HCT116 (cell line): ENCODE measurements at regions of chr3 and their contacts with region 1.

Region 1: GRCh38 chr3:197186887-197187588 is 111.4 kb downstream of the DLG1 start:
- DNase-seq: peak; percentile 32
- ATAC-seq: peak; percentile 90
- H3K4me3 ChIP-seq: no peak overlapping the region
- H3K27ac ChIP-seq: no peak overlapping the region
- H3K4me1 ChIP-seq: no peaks in the 10 kb centered on the region
- H3K27me3 ChIP-seq: no peaks in the 10 kb centered on the region
- CTCF ChIP-seq: peak; percentile 75 to 89 (median 81)
- POLR2A ChIP-seq: no peak
- RAD21 ChIP-seq: peak; percentile 80

Region 2: DNA sequence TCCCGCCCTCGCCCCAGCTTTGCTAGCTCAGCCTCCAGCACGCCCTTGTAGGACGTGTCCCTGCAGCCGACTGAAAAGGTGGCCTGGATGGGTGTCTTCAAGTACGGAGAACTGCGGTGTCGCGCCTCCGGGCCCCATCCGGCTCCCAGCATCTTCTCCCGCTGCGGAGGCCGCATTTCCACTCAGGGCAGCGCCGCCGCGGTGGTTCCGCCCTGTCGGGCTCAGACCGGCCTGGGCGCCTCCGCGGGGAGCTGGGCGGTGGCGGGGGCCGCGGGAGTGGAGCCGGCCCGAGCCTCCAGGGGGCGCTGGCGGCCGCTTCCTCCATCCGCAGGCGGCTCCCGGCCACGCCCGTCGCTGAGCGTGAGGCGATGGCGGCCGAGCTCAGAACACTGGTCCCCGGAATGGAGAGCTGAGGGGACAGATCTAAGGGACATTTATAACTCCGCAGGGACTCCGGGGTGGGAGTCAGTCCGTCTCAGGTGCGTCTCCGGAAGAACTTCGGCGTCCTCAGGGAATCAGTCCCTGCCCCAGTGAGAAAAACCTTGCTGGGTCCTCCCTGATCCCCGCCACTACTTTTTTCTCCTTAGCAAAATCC is 658.3 kb before region 1 on chr3:
- CTCF ChIA-PET with region 1: no interaction called
- POLR2A ChIA-PET with region 1: no interaction called
- RAD21 ChIA-PET with region 1: no interaction called
- intact Hi-C with region 1: loop called (anchors 10 kb)
- DNase-seq: peak; percentile 42
- ATAC-seq: peak; percentile 96
- H3K4me3 ChIP-seq: peak overlapping the region; percentile 45 to 54
- H3K27ac ChIP-seq: peak overlapping the region; percentile 12; the same call in 1 of the 2 replicates
- H3K4me1 ChIP-seq: peaks cover 5 to 27% of the 10 kb centered on the region in 2 experiments; a peak in 3 of 4 replicates
- H3K27me3 ChIP-seq: no peaks in the 10 kb centered on the region
- CTCF ChIP-seq: peak; percentile 53 to 84 (median 73); a peak in 5 of 6 replicates
- POLR2A ChIP-seq: peak; percentile 75
- RAD21 ChIP-seq: peak; percentile 57

Region 3: GRCh38 chr3:196609343-196609775 is 577.7 kb before region 1 on chr3:
- CTCF ChIA-PET with region 1: no interaction called
- POLR2A ChIA-PET with region 1: no interaction called
- RAD21 ChIA-PET with region 1: no interaction called
- intact Hi-C with region 1: loop called (anchors 10 kb)
- DNase-seq: peak; percentile 78
- ATAC-seq: peak; percentile 96
- H3K4me3 ChIP-seq: no peak overlapping the region
- H3K27ac ChIP-seq: no peak overlapping the region
- H3K4me1 ChIP-seq: peaks cover 22 to 41% of the 10 kb centered on the region in 2 experiments; a peak in 3 of 4 replicates
- H3K27me3 ChIP-seq: no peaks in the 10 kb centered on the region
- CTCF ChIP-seq: peak; percentile 85 to 97 (median 95)
- POLR2A ChIP-seq: no peak
- RAD21 ChIP-seq: peak; percentile 98

Region 4: GRCh38 chr3:196979545-196979944 is 207.5 kb before region 1 on chr3:
- CTCF ChIA-PET with region 1: no interaction called
- POLR2A ChIA-PET with region 1: no interaction called
- RAD21 ChIA-PET with region 1: no interaction called
- intact Hi-C with region 1: loop called (anchors 2 kb)
- DNase-seq: no peak
- ATAC-seq: no peak
- H3K4me3 ChIP-seq: no peak overlapping the region
- H3K27ac ChIP-seq: no peak overlapping the region
- H3K4me1 ChIP-seq: peaks cover 0 to 8% of the 10 kb centered on the region in 2 experiments; a peak in 1 of 4 replicates
- H3K27me3 ChIP-seq: no peaks in the 10 kb centered on the region
- CTCF ChIP-seq: no peak
- POLR2A ChIP-seq: no peak
- RAD21 ChIP-seq: no peak

Region 5: DNA sequence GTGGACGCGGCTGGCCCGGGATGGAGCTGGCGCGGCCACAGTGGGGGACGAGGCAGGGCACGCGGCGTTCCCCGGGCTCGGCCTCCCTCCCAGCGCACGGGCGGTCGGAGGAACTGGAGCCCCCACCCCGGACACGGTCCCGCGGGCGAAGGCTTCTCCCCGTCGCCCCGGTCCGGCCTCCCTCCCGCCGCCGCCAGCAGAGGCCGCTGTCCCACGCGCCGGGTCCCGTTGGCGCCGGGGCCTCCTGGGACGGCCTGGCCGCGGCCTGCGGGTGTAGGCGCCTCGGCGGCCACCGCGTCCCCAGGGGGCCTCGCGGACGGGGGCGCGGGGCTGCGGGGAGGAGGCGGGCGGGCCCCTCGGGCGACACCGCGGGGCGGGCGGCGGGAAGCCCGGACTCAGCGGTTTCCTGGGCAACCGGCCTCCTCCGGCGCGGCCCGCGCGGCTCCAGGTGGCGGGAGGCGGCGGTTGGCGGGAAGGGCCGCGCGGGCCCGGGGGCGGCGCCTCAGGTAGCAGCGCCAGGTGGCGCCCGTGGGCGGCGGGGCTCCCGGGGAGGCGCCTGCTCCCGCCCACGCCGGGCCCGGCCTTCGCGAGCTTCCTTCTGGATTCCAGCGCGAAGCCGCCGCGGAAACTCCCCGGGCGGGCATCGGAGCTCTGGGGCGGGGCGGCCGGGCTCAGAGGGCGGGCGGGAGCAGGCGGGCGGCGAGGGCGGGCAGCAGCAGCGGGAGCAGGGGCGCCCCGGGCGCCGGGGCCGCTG is 184.2 kb before region 1 on chr3:
- CTCF ChIA-PET with region 1: interaction called, 7 read pairs
- POLR2A ChIA-PET with region 1: no interaction called
- RAD21 ChIA-PET with region 1: interaction called in 1 of 2 experiments, 3 read pairs
- intact Hi-C with region 1: loop called (anchors 1 kb)
- DNase-seq: peak; percentile 51
- ATAC-seq: peak; percentile 85
- H3K4me3 ChIP-seq: peak overlapping the region; percentile 47 to 54; a peak in 3 of 4 replicates
- H3K27ac ChIP-seq: peak overlapping the region; percentile 67
- H3K4me1 ChIP-seq: peaks cover 21 to 40% of the 10 kb centered on the region in 2 experiments; a peak in 3 of 4 replicates
- H3K27me3 ChIP-seq: no peaks in the 10 kb centered on the region
- CTCF ChIP-seq: peak; percentile 47 to 60 (median 47); a peak in 5 of 6 replicates
- POLR2A ChIP-seq: no peak
- RAD21 ChIP-seq: peak; percentile 49

Region 6: GRCh38 chr3:197203714-197204146 is 16.7 kb after region 1 on chr3:
- CTCF ChIA-PET with region 1: no interaction called
- POLR2A ChIA-PET with region 1: no interaction called
- RAD21 ChIA-PET with region 1: no interaction called
- intact Hi-C with region 1: no loop called
- DNase-seq: no peak
- ATAC-seq: no peak
- H3K4me3 ChIP-seq: no peak overlapping the region
- H3K27ac ChIP-seq: no peak overlapping the region
- H3K4me1 ChIP-seq: no peaks in the 10 kb centered on the region
- H3K27me3 ChIP-seq: no peaks in the 10 kb centered on the region
- CTCF ChIP-seq: no peak
- POLR2A ChIP-seq: no peak
- RAD21 ChIP-seq: no peak